ENCODE measurements at regions of chr5 and their contacts with region 1.

Region 1: GRCh38 chr5:158511454-158511853 is 588.3 kb downstream of the EBF1 start:
- DNase-seq: peak; percentile 74
- ATAC-seq: peak; percentile 98
- H3K4me3 ChIP-seq: no peak overlapping the region
- H3K4me3 Mint-ChIP-seq: peak overlapping the region; percentile 33
- H3K27ac ChIP-seq: peak overlapping the region in 1 of 2 donors; percentile 21
- H3K27ac Mint-ChIP-seq: peak overlapping the region; percentile 64
- H3K4me1 ChIP-seq: peaks cover 45 to 46% of the 10 kb centered on the region in 2 donors
- H3K4me1 Mint-ChIP-seq: peaks cover 49% of the 10 kb centered on the region
- H3K27me3 ChIP-seq: no peaks in the 10 kb centered on the region
- H3K27me3 Mint-ChIP-seq: no peaks in the 10 kb centered on the region
- CTCF ChIP-seq: no peak

Region 2: DNA sequence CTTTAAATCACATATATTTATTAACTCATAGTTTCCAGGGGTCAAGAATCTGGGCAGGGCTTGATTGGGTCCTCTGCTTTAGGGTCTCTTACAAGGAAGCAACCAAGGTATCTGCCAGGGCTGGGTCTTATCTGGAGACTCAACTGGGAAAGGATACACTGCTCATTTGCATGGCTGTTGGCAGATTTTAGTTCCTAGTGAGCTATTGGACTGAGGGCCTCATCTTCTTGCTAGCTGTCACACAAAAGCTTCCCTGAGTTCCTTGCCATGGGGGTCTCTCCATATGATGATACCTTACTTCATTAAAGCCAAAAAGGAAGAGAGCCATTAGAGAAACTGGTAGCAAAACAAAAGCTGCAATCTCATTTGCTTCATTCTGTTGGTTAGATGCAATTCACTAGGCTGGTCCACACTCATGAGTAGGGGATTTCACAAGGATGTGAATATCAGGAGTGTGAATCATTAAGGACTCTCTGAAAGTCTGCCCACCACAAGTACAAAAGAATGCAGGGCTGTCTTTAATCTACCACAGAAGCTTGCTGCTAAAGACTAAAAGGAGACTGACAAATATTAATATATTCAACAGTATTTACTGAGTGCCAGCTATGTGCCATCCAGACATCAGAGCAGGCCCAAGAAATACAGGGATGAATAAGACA is 1506.4 kb before region 1 on chr5:
- CTCF ChIA-PET with region 1: no interaction called
- POLR2A ChIA-PET with region 1: no interaction called
- intact Hi-C with region 1: no loop called
- DNase-seq: no peak
- ATAC-seq: no peak
- H3K4me3 ChIP-seq: no peak overlapping the region
- H3K4me3 Mint-ChIP-seq: no peak overlapping the region
- H3K27ac ChIP-seq: no peak overlapping the region
- H3K27ac Mint-ChIP-seq: no peak overlapping the region
- H3K4me1 ChIP-seq: no peaks in the 10 kb centered on the region
- H3K4me1 Mint-ChIP-seq: no peaks in the 10 kb centered on the region
- H3K27me3 ChIP-seq: peaks cover 0 to 6% (median 0%) of the 10 kb centered on the region in 4 experiments
- H3K27me3 Mint-ChIP-seq: peaks cover 16% of the 10 kb centered on the region
- CTCF ChIP-seq: no peak

Region 3: GRCh38 chr5:158198636-158199035 is 312.8 kb before region 1 on chr5:
- CTCF ChIA-PET with region 1: no interaction called
- POLR2A ChIA-PET with region 1: no interaction called
- intact Hi-C with region 1: loop called (anchors 5 kb)
- DNase-seq: peak; percentile 70
- ATAC-seq: peak; percentile 62
- H3K4me3 ChIP-seq: peak overlapping the region in 1 of 5 experiments; percentile 11
- H3K4me3 Mint-ChIP-seq: peak overlapping the region; percentile 58
- H3K27ac ChIP-seq: no peak overlapping the region
- H3K27ac Mint-ChIP-seq: peak overlapping the region; percentile 57
- H3K4me1 ChIP-seq: peaks cover 43 to 50% of the 10 kb centered on the region in 2 donors
- H3K4me1 Mint-ChIP-seq: peaks cover 53% of the 10 kb centered on the region
- H3K27me3 ChIP-seq: no peaks in the 10 kb centered on the region
- H3K27me3 Mint-ChIP-seq: no peaks in the 10 kb centered on the region
- CTCF ChIP-seq: no peak

Region 4: GRCh38 chr5:158287643-158288271 is 223.7 kb before region 1 on chr5:
- CTCF ChIA-PET with region 1: no interaction called
- POLR2A ChIA-PET with region 1: no interaction called
- intact Hi-C with region 1: no loop called
- DNase-seq: no peak
- ATAC-seq: no peak
- H3K4me3 ChIP-seq: no peak overlapping the region
- H3K4me3 Mint-ChIP-seq: no peak overlapping the region
- H3K27ac ChIP-seq: no peak overlapping the region
- H3K27ac Mint-ChIP-seq: no peak overlapping the region
- H3K4me1 ChIP-seq: peaks cover 0 to 6% of the 10 kb centered on the region in 2 donors
- H3K4me1 Mint-ChIP-seq: no peaks in the 10 kb centered on the region
- H3K27me3 ChIP-seq: no peaks in the 10 kb centered on the region
- H3K27me3 Mint-ChIP-seq: no peaks in the 10 kb centered on the region
- CTCF ChIP-seq: no peak

Region 5: GRCh38 chr5:158435161-158435616 is 76.3 kb before region 1 on chr5:
- CTCF ChIA-PET with region 1: interaction called, 3 read pairs
- POLR2A ChIA-PET with region 1: interaction called, 4 read pairs
- intact Hi-C with region 1: loop called (anchors 10 kb)
- DNase-seq: peak; percentile 51
- ATAC-seq: peak; percentile 58
- H3K4me3 ChIP-seq: peak overlapping the region in 1 of 5 experiments; percentile 29
- H3K4me3 Mint-ChIP-seq: peak overlapping the region; percentile 82
- H3K27ac ChIP-seq: peak overlapping the region; percentile 28 to 69
- H3K27ac Mint-ChIP-seq: peak overlapping the region; percentile 75
- H3K4me1 ChIP-seq: peaks cover 54 to 64% of the 10 kb centered on the region in 2 donors
- H3K4me1 Mint-ChIP-seq: peaks cover 74% of the 10 kb centered on the region
- H3K27me3 ChIP-seq: no peaks in the 10 kb centered on the region
- H3K27me3 Mint-ChIP-seq: no peaks in the 10 kb centered on the region
- CTCF ChIP-seq: no peak

Region 6: DNA sequence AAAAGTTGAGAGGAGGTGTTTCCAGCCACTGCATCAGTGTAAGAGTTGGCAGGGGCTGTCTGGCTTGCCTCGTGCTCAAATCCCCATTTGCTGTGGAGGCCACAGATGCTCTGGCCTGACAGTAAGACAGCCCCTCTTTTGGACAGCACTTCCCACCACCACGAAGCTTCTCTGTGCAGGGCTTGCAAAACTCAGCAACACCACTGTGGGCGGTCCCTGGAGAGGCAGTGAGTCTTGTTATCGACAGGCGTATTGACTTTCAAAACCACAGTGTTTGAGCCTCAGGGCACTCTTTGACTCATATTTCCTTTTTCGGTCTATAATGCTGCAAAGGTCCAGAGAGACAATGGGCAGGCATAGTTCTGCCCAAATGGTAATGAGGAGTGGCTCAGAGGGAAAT is 48.7 kb after region 1 on chr5:
- CTCF ChIA-PET with region 1: no interaction called
- POLR2A ChIA-PET with region 1: no interaction called
- intact Hi-C with region 1: loop called (anchors 5 kb)
- DNase-seq: peak; percentile 46
- ATAC-seq: peak; percentile 81
- H3K4me3 ChIP-seq: peak overlapping the region in 2 of 5 experiments; percentile 16
- H3K4me3 Mint-ChIP-seq: peak overlapping the region; percentile 80
- H3K27ac ChIP-seq: no peak overlapping the region
- H3K27ac Mint-ChIP-seq: peak overlapping the region; percentile 79
- H3K4me1 ChIP-seq: peaks cover 33 to 44% of the 10 kb centered on the region in 2 donors
- H3K4me1 Mint-ChIP-seq: peaks cover 57% of the 10 kb centered on the region
- H3K27me3 ChIP-seq: no peaks in the 10 kb centered on the region
- H3K27me3 Mint-ChIP-seq: no peaks in the 10 kb centered on the region
- CTCF ChIP-seq: no peak

Region 7: GRCh38 chr5:158599157-158599556 is 87.7 kb after region 1 on chr5:
- CTCF ChIA-PET with region 1: no interaction called
- POLR2A ChIA-PET with region 1: no interaction called
- intact Hi-C with region 1: loop called (anchors 5 kb)
- DNase-seq: peak; percentile 41
- ATAC-seq: peak; percentile 35
- H3K4me3 ChIP-seq: no peak overlapping the region
- H3K4me3 Mint-ChIP-seq: peak overlapping the region; percentile 56
- H3K27ac ChIP-seq: no peak overlapping the region
- H3K27ac Mint-ChIP-seq: peak overlapping the region; percentile 63
- H3K4me1 ChIP-seq: peaks cover 17 to 21% of the 10 kb centered on the region in 2 donors
- H3K4me1 Mint-ChIP-seq: peaks cover 24% of the 10 kb centered on the region
- H3K27me3 ChIP-seq: no peaks in the 10 kb centered on the region
- H3K27me3 Mint-ChIP-seq: no peaks in the 10 kb centered on the region
- CTCF ChIP-seq: no peak

Region 8: DNA sequence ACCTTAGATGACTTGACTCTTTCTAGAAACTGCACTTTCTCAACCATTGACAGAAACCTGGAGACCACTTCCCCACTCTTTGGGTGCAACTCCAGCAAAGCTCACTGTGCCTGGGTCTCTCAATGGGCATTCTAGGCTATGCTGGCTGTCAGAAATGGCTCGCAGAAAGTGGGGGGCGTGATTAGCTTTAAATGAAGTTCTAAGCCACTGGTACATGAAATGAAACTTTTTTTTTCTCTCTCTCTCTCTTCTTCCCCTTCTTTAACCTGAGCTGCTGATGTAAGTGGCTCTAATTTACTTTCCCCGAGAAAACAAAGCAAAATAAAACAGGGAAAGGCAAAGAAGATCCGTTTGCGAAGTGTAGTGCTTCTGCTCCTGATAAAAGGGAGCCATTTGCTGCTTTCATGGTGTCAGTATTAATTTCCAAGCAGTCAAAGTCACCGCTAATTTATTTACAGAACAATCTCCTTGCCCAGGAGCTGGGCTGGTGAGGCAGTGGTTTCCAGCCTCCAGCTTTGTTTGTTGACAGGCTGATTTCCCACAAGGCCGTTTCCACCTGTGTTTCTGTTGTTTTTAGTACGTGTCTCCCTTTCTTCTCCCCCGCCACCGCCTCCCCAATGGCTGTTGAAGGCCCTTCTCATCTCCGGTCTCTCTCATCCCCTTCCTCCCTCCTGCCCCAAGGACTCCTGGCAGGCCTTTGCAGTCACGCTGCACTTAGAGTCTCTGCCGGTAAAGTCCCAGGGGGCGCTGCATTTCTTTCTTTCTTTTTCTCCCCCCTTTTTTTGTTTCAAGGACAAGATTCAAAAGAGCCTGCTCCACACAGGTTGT is 165.4 kb after region 1 on chr5:
- CTCF ChIA-PET with region 1: interaction called, 3 read pairs
- POLR2A ChIA-PET with region 1: no interaction called
- intact Hi-C with region 1: loop called (anchors 10 kb)
- DNase-seq: peak; percentile 62
- ATAC-seq: peak; percentile 76
- H3K4me3 ChIP-seq: peak overlapping the region; percentile 15 to 48 (median 41)
- H3K4me3 Mint-ChIP-seq: peak overlapping the region; percentile 76
- H3K27ac ChIP-seq: peak overlapping the region; percentile 62 to 89
- H3K27ac Mint-ChIP-seq: peak overlapping the region; percentile 87
- H3K4me1 ChIP-seq: peaks cover 22 to 28% of the 10 kb centered on the region in 2 donors
- H3K4me1 Mint-ChIP-seq: peaks cover 28% of the 10 kb centered on the region
- H3K27me3 ChIP-seq: no peaks in the 10 kb centered on the region
- H3K27me3 Mint-ChIP-seq: no peaks in the 10 kb centered on the region
- CTCF ChIP-seq: peak; percentile 8